ENCODE measurements at regions of chr17 and their contacts with region 1.

Region 1: GRCh38 chr17:67390646-67391384 is 13.7 kb downstream of the PITPNC1 start:
- DNase-seq: peak; percentile 90
- ATAC-seq: peak; percentile 88
- H3K4me3 Mint-ChIP-seq: peak overlapping the region; percentile 69
- H3K27ac Mint-ChIP-seq: peak overlapping the region; percentile 99
- H3K4me1 Mint-ChIP-seq: peaks cover 85% of the 10 kb centered on the region
- H3K27me3 Mint-ChIP-seq: no peaks in the 10 kb centered on the region
- CTCF ChIP-seq: no peak

Region 2: DNA sequence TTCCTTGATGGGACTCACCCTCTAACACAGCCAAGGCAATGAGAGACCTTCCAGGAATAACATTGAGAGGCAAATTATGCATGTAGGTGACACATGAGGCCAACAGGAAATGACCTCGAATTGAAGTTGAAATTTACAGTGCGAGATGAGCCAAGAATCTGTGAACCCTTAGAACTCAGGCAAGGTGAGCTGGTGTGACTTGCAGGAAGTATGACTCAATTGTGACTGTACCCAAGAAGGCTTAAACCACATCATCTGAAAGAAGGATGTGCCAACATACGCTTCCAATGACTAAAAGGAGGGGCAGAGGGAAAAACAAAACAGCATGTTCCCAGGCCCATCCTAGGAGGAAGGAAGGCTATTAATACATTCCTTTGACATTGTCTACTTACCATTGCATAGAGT is 31.1 kb after region 1 on chr17:
- CTCF ChIA-PET with region 1: interaction called, 18 read pairs
- POLR2A ChIA-PET with region 1: no interaction called
- intact Hi-C with region 1: loop called (anchors 5 kb)
- DNase-seq: peak; percentile 71
- ATAC-seq: peak; percentile 95
- H3K4me3 Mint-ChIP-seq: peak overlapping the region; percentile 33
- H3K27ac Mint-ChIP-seq: peak overlapping the region; percentile 88
- H3K4me1 Mint-ChIP-seq: peaks cover 86% of the 10 kb centered on the region
- H3K27me3 Mint-ChIP-seq: no peaks in the 10 kb centered on the region
- CTCF ChIP-seq: no peak

Region 3: DNA sequence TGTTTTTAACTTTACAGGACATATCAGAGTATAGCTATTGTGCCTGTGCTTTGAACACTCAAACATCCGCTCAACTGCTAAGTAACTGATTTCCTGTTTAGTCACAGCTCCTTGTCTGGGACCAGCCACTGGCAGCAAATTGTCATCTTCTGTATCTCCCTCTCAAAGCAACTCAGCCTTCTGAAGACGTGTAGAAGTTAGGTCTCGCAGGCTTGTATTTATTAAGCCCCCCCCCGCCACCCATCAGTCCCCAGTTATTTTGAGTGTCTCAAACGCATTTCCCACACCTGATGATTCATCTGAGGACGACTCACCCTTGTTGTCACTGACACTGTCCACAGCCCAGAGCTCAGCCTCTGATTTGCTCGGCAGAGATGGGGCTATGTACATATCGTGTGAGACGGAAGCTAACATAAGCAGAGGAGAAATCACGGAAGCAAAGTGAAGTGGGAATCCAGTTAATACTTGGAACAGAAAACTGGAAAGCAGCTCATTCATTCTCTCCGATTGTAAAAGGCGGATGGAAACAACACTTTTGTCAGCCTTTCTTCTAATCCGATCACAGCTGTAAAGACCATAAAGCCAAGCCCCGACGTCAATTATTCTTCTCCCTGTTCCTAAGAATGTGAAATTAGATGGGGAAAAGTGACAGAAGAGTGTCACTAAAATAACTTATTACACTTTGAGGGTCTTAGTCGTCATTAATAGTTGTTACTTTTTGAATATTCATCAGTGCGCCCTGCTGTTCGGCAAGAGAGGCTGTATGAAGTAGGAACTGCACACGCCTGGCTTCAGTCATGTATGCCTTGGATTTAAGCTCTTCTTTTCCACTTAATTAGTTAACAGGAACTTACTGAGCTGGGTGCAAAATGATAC is 50.5 kb after region 1 on chr17:
- CTCF ChIA-PET with region 1: interaction called, 33 read pairs
- POLR2A ChIA-PET with region 1: interaction called, 26 read pairs
- intact Hi-C with region 1: no loop called
- DNase-seq: peak; percentile 90
- ATAC-seq: peak; percentile 90
- H3K4me3 Mint-ChIP-seq: peak overlapping the region; percentile 77
- H3K27ac Mint-ChIP-seq: peak overlapping the region; percentile 97
- H3K4me1 Mint-ChIP-seq: peaks cover 71% of the 10 kb centered on the region
- H3K27me3 Mint-ChIP-seq: no peaks in the 10 kb centered on the region
- CTCF ChIP-seq: no peak

Region 4: GRCh38 chr17:67475236-67475937 is 84.6 kb after region 1 on chr17:
- CTCF ChIA-PET with region 1: interaction called, 119 read pairs
- POLR2A ChIA-PET with region 1: interaction called, 24 read pairs
- intact Hi-C with region 1: no loop called
- DNase-seq: peak; percentile 92
- ATAC-seq: peak; percentile 71
- H3K4me3 Mint-ChIP-seq: peak overlapping the region; percentile 68
- H3K27ac Mint-ChIP-seq: peak overlapping the region; percentile 92
- H3K4me1 Mint-ChIP-seq: peaks cover 67% of the 10 kb centered on the region
- H3K27me3 Mint-ChIP-seq: no peaks in the 10 kb centered on the region
- CTCF ChIP-seq: peak; percentile 87

Measured in activated CD8-positive, alpha-beta T cell treated with anti-CD3 and anti-CD28 coated beads for 36 hours (primary cell).